Activated T-helper 1 cell treated with anti-CD3 and anti-CD28 coated beads, Interleukin-12 subunit alpha, Interleukin-12 subunit beta, Interleukin-2, Interleukin-4 antibody, amounts not matched to agents 30 ng/mL and 10 ng/mL and 1 ng/mL, durations not matched to agents 14 hours and 24 hours and 36 hours (primary cell): ENCODE measurements at regions of chr7 and their contacts with region 1.

Region 1: DNA sequence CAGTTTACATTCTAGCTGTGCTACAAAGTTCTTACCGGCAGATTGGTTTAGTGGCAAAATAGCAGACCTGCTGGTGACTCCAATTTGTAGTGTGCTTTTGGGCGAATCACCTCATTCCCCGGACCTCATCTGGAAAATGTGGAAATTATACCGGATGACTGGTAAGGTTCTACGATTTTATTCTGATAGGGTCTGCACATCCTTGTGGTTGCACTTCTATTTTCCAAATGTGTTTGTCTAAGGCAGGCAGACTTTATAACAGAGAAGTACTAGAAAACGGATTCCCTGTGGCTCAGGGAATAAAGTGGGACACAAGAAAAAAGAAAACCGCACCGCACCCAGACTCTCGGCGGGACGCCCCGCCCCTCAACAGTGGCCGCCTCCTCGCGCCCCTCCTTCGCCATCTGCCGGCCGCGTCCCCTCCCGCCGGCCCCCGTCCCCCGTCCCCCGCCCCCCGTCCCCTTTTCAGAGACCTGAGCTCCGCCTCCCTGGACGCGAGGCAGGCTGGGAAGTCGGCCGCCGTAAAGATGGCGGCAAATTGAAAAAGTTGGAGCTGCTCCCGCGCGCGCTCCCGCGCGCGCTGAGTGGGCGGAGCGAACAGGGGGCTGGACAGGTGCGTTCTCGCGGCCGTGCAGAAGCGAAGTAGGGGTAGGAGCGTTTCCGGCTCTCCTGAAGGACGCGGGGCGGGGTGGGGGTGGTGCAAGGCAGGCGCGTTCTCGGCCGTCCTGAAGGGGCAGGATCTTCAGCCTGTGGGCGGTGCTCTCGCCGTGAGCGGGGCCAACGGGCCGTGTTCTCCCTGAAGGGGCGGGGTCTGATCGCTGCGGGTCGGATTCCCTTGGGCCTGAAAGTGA is 531 bp upstream of the CCM2 start:
- DNase-seq: peak; percentile 99
- H3K4me3 Mint-ChIP-seq: peak overlapping the region; percentile 88
- H3K27ac Mint-ChIP-seq: peak overlapping the region; percentile 91
- H3K4me1 Mint-ChIP-seq: peaks cover 58% of the 10 kb centered on the region
- H3K27me3 Mint-ChIP-seq: no peaks in the 10 kb centered on the region

Region 2: DNA sequence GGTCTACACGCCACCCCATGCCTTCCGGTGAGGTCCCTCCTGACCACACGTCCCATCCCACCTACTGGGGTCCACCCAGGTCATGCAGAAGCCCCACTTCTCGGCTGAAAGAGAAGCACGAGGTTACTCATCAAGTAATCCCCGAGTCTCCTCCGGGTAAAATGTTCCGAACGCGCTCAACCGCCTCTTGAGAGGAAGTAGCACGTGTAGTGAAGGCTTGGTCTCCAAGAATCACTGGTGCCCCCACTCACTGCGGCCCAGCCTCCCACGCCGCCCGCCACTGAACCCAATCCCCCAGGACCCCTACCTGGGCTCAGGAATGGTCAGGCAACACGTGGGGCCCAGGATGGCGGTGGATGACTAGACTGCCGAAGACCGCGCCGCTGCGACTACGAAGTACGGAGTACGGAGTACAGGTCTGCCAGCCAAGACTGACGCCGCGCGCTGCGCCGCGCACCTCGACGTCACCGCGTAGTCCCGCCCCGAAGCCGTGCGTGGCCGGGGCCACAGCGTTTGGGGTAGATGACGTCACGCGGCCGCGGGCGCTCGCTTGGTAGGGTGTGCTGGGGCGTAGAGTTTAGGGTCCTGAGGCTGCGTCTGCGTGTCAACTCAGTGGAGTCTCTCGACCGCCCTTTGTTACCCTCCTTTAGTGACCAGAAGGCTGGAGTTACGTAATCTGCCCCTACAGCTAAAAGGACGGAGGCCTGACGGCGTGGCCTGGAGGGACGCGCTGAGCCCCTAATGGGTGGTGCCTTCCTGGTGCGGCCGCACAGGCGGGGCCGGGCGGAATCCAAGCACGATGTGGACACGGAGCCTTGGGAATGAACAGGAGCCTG is 13.0 kb before region 1 on chr7:
- intact Hi-C with region 1: loop called (anchors 1 kb)
- DNase-seq: peak; percentile 96
- H3K4me3 Mint-ChIP-seq: peak overlapping the region; percentile 98
- H3K27ac Mint-ChIP-seq: peak overlapping the region; percentile 99
- H3K4me1 Mint-ChIP-seq: peaks cover 64% of the 10 kb centered on the region
- H3K27me3 Mint-ChIP-seq: no peaks in the 10 kb centered on the region

Region 3: GRCh38 chr7:45021604-45022296 is 22.3 kb after region 1 on chr7:
- intact Hi-C with region 1: loop called (anchors 1 kb)
- DNase-seq: no peak
- H3K4me3 Mint-ChIP-seq: peak overlapping the region; percentile 21
- H3K27ac Mint-ChIP-seq: peak overlapping the region; percentile 89
- H3K4me1 Mint-ChIP-seq: peaks cover 55% of the 10 kb centered on the region
- H3K27me3 Mint-ChIP-seq: no peaks in the 10 kb centered on the region

Region 4: DNA sequence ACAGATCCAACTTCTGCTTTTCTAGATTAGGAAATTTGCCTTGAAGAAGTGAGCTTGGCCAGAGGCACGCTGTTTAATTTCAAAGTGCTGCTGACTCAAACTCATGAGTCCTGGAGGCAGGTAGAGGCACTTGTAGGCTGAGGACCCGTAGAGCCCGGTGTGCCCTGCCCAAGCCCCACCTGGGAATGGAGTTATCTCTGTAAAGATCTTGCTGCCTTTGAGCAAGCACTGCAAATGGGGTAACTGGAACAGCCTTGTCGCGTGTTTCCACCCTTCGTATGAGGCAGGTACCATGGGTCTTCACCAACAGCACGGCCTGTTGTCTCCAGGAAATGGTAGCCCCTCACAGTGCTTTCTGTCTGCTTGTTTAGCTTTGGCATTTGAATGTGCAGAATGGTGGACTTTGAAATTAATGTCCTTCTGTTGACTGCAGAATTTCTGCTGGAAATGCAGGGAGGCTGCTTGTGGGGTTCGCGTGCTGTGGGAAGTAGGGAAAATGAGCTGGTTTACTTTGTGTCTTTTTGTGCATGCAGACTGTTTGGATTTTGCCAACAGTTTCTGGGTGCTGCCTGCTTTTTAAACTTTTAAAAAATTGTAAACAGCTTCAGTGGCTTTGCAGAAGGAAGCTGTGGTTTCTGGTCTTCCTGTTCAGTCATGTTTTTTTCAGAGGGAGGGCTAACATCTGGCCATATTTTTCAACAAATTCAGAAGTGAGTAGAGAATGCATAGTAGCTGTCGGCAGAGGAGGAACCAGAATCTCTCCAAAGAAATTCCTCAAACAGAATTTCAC is 27.7 kb after region 1 on chr7:
- intact Hi-C with region 1: loop called (anchors 1 kb)
- DNase-seq: peak; percentile 42
- H3K4me3 Mint-ChIP-seq: peak overlapping the region; percentile 92
- H3K27ac Mint-ChIP-seq: peak overlapping the region; percentile 93
- H3K4me1 Mint-ChIP-seq: peaks cover 72% of the 10 kb centered on the region
- H3K27me3 Mint-ChIP-seq: no peaks in the 10 kb centered on the region

Region 5: GRCh38 chr7:45290885-45291284 is 291.4 kb after region 1 on chr7:
- intact Hi-C with region 1: no loop called
- DNase-seq: no peak
- H3K4me3 Mint-ChIP-seq: no peak overlapping the region
- H3K27ac Mint-ChIP-seq: no peak overlapping the region
- H3K4me1 Mint-ChIP-seq: no peaks in the 10 kb centered on the region
- H3K27me3 Mint-ChIP-seq: peaks cover 3% of the 10 kb centered on the region

Region 6: DNA sequence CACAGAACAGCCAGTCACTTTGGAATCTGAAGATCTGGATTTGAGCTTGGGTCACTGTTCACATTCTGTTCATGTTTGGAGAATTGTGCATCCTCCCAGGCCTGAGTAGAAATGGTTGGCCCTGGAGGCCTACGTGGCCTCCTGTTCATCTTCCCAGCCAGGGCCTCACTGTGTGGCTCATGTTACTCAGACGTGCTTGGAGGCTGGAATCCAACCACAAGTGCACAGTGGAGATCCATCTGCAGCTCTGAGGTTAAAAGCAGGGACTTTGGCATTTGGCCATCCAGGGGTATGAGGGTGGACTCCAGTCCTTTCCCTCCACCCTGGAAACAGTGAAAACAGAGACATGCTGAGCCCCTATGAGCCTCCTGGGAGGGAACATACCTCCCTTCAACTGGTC is 1630.6 kb after region 1 on chr7:
- intact Hi-C with region 1: no loop called
- DNase-seq: no peak
- H3K4me3 Mint-ChIP-seq: no peak overlapping the region
- H3K27ac Mint-ChIP-seq: no peak overlapping the region
- H3K4me1 Mint-ChIP-seq: no peaks in the 10 kb centered on the region
- H3K27me3 Mint-ChIP-seq: no peaks in the 10 kb centered on the region